Endothelial cell of umbilical vein (primary cell): ENCODE measurements at regions of chr12 and their contacts with region 1.

Region 1: GRCh38 chr12:30806989-30807694 is 52.4 kb upstream of the CAPRIN2 start:
- DNase-seq: peak; percentile 78
- H3K4me3 ChIP-seq: no peak overlapping the region
- H3K27ac ChIP-seq: no peak overlapping the region
- H3K4me1 ChIP-seq: no peaks in the 10 kb centered on the region
- H3K27me3 ChIP-seq: no peaks in the 10 kb centered on the region
- CTCF ChIP-seq: peak; percentile 54
- POLR2A ChIP-seq: no peak

Region 2: DNA sequence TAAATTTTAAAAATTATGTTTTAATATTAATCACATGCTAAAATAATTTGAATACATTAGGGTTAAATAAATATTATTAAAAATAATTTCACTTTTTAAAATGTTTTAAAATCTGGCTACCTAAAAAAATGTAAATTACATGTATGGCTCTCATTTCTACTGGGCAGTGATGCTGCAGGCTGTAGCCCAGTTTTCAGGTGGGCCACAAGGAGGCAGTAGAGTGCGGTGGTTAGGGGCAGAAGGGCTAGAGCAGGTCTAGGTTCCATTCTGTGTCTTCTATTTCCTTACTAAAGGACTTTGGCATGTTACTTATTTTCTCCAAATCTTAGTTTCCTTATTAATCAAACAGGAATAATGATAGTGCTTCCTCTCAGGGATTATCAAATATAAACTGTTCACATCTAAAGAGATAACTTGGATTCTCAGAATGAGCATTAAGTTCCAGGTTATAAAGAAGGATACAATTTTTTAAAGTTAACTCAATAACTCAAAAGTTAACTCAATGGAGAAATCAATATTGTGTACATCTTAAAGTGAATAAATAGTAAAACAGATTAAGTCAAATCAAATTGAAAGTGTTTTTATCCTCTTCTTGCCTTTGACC is 1254.7 kb before region 1 on chr12:
- CTCF ChIA-PET with region 1: interaction called, 5 read pairs
- POLR2A ChIA-PET with region 1: no interaction called
- dilution Hi-C with region 1: no loop called
- intact Hi-C with region 1: loop called (anchors 1 kb)
- DNase-seq: peak; percentile 66
- H3K4me3 ChIP-seq: no peak overlapping the region
- H3K27ac ChIP-seq: no peak overlapping the region
- H3K4me1 ChIP-seq: peaks cover 4% of the 10 kb centered on the region
- H3K27me3 ChIP-seq: no peaks in the 10 kb centered on the region
- CTCF ChIP-seq: peak; percentile 82 to 85
- POLR2A ChIP-seq: no peak

Region 3: DNA sequence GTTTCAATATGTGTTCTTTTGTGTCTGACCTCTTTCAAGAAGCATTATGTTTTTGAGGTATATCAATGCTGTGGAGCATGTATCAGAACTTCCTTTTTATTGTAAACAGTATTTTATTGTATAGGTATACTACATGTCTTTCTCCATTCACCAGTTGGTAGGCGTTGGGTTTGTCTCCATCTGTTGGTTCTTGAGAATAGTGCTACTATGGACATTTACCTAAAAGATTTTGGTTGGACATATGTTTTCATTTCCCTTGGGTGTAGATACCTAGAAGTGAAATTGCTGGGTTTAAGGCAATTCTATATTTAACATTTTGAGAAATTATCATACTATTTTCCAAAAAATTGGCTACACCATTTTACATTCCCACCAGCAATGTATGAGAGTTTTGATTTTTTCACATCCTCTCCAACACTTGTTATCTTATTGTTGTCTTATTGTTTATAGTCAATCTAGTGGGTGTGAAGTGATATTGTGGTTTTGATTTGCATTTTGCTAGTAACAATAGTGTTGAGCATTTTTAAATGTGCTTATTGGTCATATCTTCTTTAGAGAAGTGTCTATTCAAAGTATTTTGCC is 520.7 kb before region 1 on chr12:
- CTCF ChIA-PET with region 1: no interaction called
- POLR2A ChIA-PET with region 1: no interaction called
- dilution Hi-C with region 1: no loop called
- intact Hi-C with region 1: loop called (anchors 2 kb)
- DNase-seq: peak; percentile 64
- H3K4me3 ChIP-seq: no peak overlapping the region
- H3K27ac ChIP-seq: no peak overlapping the region
- H3K4me1 ChIP-seq: no peaks in the 10 kb centered on the region
- H3K27me3 ChIP-seq: peaks cover 4 to 5% of the 10 kb centered on the region in 2 experiments
- CTCF ChIP-seq: peak; percentile 40 to 48
- POLR2A ChIP-seq: no peak

Region 4: DNA sequence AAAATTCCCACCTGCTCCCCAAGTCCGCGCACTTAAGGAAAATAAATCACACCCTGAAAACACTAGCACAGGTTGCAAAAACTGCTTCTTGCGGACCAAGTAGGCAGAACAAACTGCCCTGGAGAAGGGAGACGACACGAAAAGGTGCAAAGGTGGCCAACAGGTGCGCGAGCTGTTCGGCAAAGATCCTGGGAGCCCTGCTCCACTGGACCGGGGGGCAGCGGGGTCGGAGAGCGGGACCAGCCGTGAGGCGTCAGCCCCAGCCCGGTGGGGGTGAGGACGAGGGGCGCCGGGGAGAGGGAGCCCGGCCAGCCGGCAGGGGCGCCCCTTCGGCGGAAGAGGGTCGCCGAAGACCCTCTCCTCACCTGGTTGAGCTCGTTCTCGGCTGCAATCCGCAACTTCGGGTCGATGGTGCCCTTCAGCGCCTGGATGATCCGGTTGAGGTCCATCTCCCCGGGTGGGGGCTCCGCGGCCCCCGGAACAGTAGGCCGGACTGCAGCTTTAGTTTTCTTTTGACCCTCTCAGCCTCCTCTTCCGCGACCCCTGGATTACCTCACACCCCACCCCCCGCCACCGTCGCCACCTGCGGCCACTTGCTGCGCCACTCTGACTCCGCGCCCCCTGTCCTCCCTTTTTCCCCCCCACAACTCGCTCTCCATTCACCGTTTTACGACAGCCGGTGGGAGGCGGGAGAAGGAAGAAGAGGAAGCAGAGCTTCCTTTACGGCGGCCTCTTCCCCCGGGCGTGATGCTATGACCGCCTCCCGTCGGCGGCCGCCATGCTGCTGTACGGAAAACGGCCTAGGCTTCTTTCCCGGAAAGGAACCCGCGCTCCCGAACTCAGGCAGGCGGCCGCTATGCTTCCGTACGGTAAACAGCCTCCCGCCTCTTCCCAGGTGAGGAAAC is 111.7 kb before region 1 on chr12 and contains the start of gene IPO8:
- CTCF ChIA-PET with region 1: interaction called, 5 read pairs
- POLR2A ChIA-PET with region 1: no interaction called
- dilution Hi-C with region 1: no loop called
- intact Hi-C with region 1: loop called (anchors 1 kb)
- DNase-seq: peak; percentile 89
- H3K4me3 ChIP-seq: peak within 1 kb of the TSS; percentile 52 to 96 (median 78)
- H3K27ac ChIP-seq: peak within 1 kb of the TSS; percentile 26
- H3K4me1 ChIP-seq: peaks cover 20% of the 10 kb centered on the region
- H3K27me3 ChIP-seq: no peaks in the 10 kb centered on the region
- CTCF ChIP-seq: peak; percentile 20 to 59
- POLR2A ChIP-seq: peak; percentile 33
- total RNA-seq, gene IPO8: 44.7 and 52.5 TPM in 2 replicates

Region 5: DNA sequence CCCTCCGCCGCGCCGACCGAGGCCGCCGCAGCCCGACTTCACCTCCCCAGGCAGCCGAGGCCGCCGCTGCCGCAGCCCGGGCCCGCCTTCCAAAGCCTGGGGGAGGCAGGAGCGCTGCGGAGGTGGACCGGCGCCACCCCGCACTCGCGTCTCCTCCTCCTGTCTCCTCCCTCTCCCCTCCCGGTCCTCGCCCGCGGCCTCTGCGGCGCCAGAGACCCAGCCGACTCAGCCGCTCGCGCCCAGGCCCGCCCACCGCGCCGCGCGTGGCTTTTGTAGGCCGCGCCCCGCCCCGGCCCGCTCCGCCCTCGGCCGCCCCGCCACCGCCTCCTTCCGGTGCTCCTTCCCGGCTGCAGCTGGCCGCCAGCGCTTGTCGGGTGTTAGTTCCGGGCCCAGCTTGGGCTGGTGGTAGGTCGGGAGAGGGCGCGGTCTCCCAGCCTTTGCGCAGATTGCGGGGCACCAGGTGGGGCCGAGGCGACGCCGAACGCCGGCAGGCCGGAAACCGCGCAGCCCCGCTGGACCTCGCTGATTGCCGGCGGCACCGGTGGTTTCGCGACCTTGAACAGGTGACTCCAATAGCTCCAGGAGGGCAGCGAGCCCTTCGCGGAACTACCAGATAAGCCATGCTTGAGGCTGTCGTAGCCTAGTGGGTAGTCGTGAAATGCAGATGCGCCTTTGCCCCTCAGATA is 52.3 kb before region 1 on chr12 and contains the start of gene CAPRIN2:
- CTCF ChIA-PET with region 1: interaction called, 24 read pairs
- POLR2A ChIA-PET with region 1: no interaction called
- dilution Hi-C with region 1: no loop called
- intact Hi-C with region 1: loop called (anchors 1 kb)
- DNase-seq: peak; percentile 95
- H3K4me3 ChIP-seq: peak within 1 kb of the TSS; percentile 7 to 70 (median 53)
- H3K27ac ChIP-seq: peak within 1 kb of the TSS; percentile 38
- H3K4me1 ChIP-seq: peaks cover 15% of the 10 kb centered on the region
- H3K27me3 ChIP-seq: no peaks in the 10 kb centered on the region
- CTCF ChIP-seq: peak in 1 of 2 donors; percentile 20
- POLR2A ChIP-seq: peak; percentile 67
- total RNA-seq, gene CAPRIN2: 25.0 and 29.9 TPM in 2 replicates

Region 6: DNA sequence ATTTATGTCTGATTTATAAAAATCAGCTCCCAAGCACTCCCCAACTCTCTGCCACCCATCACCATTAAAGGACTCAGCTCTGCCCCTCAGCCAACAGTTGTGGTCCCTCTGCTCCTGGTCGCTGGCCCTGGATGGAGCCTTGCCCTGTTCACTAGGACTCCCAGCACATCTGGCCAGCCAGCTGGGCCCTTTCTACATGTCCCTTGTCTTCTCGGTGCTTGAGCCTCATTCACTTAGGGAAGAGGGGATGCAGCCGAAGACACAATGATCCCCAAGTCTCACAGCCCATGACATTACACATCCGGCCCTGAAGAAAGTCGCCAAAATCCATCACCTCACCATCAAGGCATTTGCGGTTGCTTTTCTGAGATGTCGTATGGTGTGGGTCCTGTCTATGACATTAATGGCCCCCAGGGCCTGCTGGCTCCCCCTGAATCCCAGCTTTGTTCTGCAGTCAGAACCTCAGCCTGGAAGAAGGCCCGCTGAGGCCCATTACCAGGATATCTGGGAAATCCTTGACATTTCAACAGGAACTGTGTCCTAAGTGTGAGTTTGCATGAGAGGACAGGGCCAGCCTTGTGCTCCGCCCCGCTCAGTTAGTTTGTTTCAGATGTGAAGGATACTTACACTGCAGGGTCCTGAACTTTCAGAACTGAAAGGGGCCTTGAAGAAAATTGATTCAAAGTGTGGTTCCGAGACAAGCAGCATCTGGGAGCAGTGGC is 138.5 kb after region 1 on chr12:
- CTCF ChIA-PET with region 1: no interaction called
- POLR2A ChIA-PET with region 1: no interaction called
- dilution Hi-C with region 1: no loop called
- intact Hi-C with region 1: no loop called
- DNase-seq: no peak
- H3K4me3 ChIP-seq: no peak overlapping the region
- H3K27ac ChIP-seq: no peak overlapping the region
- H3K4me1 ChIP-seq: no peaks in the 10 kb centered on the region
- H3K27me3 ChIP-seq: peaks cover 0 to 2% of the 10 kb centered on the region in 2 experiments
- CTCF ChIP-seq: no peak
- POLR2A ChIP-seq: no peak